Esophagus muscularis mucosa (tissue), 4 donors: ENCODE measurements at regions of chr9 and their contacts with region 1.

Region 1: GRCh38 chr9:134325817-134326723 is at the start of gene RXRA:
- DNase-seq: no peak
- H3K4me3 ChIP-seq: peak within 1 kb of the TSS; percentile 73 to 96 (median 84)
- H3K27ac ChIP-seq: peak within 1 kb of the TSS; percentile 90 to 99 (median 98)
- H3K4me1 ChIP-seq: peaks cover 56 to 63% (median 59%) of the 10 kb centered on the region in 4 donors
- H3K27me3 ChIP-seq: peaks cover 0 to 4% (median 0%) of the 10 kb centered on the region in 4 donors
- CTCF ChIP-seq: peak in 2 of 3 experiments; percentile 5 to 44
- EP300 ChIP-seq: no peak
- POLR2A ChIP-seq: peak; percentile 83
- total RNA-seq, gene RXRA: 46.4 to 81.0 (median 63.7) TPM

Region 2: GRCh38 chr9:134171316-134172197 is 154.5 kb before region 1 on chr9:
- intact Hi-C with region 1: loop called (anchors 2 kb)
- DNase-seq: no peak
- H3K4me3 ChIP-seq: no peak overlapping the region
- H3K27ac ChIP-seq: peak overlapping the region in 3 of 4 donors; percentile 16 to 34 (median 22)
- H3K4me1 ChIP-seq: peaks cover 10 to 34% (median 31%) of the 10 kb centered on the region in 4 donors
- H3K27me3 ChIP-seq: peaks cover 0 to 41% (median 10%) of the 10 kb centered on the region in 4 donors
- CTCF ChIP-seq: no peak
- EP300 ChIP-seq: no peak
- POLR2A ChIP-seq: no peak

Region 3: DNA sequence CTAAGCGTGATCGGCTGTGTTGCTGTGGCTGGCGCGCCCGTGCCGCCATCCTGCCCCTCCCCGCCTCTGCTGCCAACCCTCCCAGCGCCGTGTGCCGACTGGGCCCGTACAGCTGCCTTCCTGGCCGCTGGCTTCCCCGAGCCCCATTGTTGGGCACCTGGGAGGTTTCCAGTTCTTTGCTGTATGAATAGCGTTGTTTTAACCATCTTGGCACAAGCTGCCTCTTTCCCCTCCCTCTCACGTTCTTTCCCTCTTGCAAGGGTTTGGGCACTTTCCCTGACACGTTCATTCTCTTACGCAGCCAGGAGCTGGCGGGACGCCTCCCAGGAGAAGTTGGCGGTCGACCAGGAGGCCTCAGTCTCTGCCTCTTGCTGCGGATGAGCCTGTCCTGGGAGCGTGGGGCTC is 43.0 kb before region 1 on chr9:
- intact Hi-C with region 1: loop called (anchors 5 kb)
- DNase-seq: no peak
- H3K4me3 ChIP-seq: peak overlapping the region; percentile 9 to 35 (median 18)
- H3K27ac ChIP-seq: peak overlapping the region; percentile 69 to 79 (median 76)
- H3K4me1 ChIP-seq: peaks cover 20 to 25% (median 24%) of the 10 kb centered on the region in 4 donors
- H3K27me3 ChIP-seq: no peaks in the 10 kb centered on the region
- CTCF ChIP-seq: no peak
- EP300 ChIP-seq: no peak
- POLR2A ChIP-seq: no peak

Region 4: DNA sequence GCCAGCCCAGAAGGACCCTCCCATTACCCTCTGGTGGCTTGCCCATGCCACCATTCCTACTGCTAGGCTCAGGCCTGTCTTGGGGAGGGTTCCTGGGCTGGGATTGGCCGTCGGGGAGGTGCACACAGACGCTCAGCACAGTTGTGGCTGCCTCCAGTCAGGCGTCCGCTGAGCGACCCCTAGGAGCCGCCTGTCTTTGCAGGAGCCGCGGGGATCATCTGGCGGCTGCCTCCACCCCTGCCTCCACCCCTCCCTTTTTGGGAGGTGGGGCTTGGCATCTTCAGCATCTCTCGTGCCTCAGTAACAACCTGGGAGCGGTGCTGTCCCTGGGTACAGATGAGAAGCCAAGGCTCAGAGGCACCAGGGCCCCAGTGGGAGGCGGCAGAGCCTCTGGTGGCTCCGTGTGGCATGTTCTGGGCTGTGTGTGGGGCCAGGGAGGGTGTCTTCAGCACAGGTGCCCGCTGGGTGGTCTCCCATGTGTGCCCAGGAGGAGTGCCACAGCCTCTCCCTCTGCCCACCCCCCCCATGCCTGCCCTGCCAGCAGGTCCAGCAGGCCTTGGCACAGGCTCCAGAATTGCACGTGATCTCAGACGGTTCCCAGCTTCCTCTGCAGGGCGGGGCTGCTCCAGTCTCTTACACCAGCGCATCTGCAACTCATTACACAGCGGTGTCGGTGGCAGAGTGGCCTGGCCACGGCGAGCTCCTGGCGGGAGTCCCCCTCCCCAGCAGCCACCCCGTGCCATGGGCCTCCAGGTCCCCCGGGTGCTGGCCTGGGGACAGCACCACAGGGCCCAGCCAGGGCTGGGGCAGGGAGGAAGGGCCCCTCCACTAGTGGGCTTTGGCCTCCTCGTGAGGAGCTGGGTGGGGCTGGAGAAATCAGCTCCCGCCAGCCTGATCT is 40.0 kb after region 1 on chr9:
- intact Hi-C with region 1: loop called (anchors 5 kb)
- DNase-seq: peak; percentile 97
- H3K4me3 ChIP-seq: peak overlapping the region; percentile 32 to 55 (median 44)
- H3K27ac ChIP-seq: peak overlapping the region; percentile 86 to 91 (median 90)
- H3K4me1 ChIP-seq: peaks cover 74 to 94% (median 91%) of the 10 kb centered on the region in 4 donors
- H3K27me3 ChIP-seq: no peaks in the 10 kb centered on the region
- CTCF ChIP-seq: peak; percentile 21 to 24 (median 23)
- EP300 ChIP-seq: no peak
- POLR2A ChIP-seq: peak; percentile 79

Region 5: DNA sequence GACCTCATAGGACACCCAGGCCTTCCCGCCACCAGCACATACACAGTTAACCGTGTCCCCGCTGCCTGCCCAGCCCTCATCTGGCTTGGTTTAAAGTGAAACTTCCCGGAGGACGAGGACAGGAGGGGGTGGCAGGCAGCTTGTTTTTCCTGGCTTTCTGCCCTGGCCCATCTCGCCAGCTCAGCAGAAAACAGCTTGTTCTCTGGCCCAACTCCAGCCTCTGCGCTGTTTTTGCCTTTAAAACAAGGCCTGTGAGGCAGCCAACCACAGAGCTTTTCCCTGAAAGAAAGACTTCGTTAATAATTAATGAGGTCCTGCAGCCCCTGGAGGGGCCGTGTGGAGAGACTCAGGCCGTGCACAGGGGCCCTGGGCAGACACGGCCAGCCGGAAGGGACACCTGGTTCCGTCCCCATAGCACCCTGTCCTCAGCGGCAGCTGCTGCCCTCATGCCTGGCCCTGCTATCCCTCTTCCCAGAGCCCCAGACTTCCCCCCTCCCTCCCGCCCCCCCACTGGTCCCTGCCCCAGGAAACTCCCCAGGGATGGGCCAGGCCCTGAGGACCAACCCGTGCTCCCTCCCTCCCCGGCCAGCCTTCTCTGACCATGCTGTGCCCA is 108.9 kb after region 1 on chr9:
- intact Hi-C with region 1: loop called (anchors 2 kb)
- DNase-seq: peak; percentile 98
- H3K4me3 ChIP-seq: peak overlapping the region; percentile 22 to 43 (median 33)
- H3K27ac ChIP-seq: peak overlapping the region; percentile 89 to 90 (median 90)
- H3K4me1 ChIP-seq: peaks cover 70 to 91% (median 83%) of the 10 kb centered on the region in 4 donors
- H3K27me3 ChIP-seq: no peaks in the 10 kb centered on the region
- CTCF ChIP-seq: no peak
- EP300 ChIP-seq: no peak
- POLR2A ChIP-seq: no peak